Activated CD4-positive, alpha-beta T cell treated with anti-CD3 and anti-CD28 coated beads for 36 hours (primary cell): ENCODE measurements at regions of chr10 and their contacts with region 1.

Region 1: GRCh38 chr10:72692057-72692910 is at the start of gene MCU:
- DNase-seq: peak; percentile 96
- ATAC-seq: peak; percentile 98
- H3K4me3 Mint-ChIP-seq: peak within 1 kb of the TSS; percentile 77
- H3K27ac Mint-ChIP-seq: peak within 1 kb of the TSS; percentile 75
- H3K4me1 Mint-ChIP-seq: peaks cover 40% of the 10 kb centered on the region
- H3K27me3 Mint-ChIP-seq: no peaks in the 10 kb centered on the region
- total RNA-seq, gene MCU: 15.1 to 16.0 TPM

Region 2: GRCh38 chr10:72088889-72089575 is 603.3 kb before region 1 on chr10:
- CTCF ChIA-PET with region 1: no interaction called
- POLR2A ChIA-PET with region 1: interaction called, 3 read pairs
- intact Hi-C with region 1: loop called in 1 of 2 experiments (anchors 5 kb)
- DNase-seq: peak; percentile 79
- ATAC-seq: peak; percentile 50
- H3K4me3 Mint-ChIP-seq: peak overlapping the region; percentile 98
- H3K27ac Mint-ChIP-seq: peak overlapping the region; percentile 100
- H3K4me1 Mint-ChIP-seq: peaks cover 57% of the 10 kb centered on the region
- H3K27me3 Mint-ChIP-seq: no peaks in the 10 kb centered on the region

Region 3: DNA sequence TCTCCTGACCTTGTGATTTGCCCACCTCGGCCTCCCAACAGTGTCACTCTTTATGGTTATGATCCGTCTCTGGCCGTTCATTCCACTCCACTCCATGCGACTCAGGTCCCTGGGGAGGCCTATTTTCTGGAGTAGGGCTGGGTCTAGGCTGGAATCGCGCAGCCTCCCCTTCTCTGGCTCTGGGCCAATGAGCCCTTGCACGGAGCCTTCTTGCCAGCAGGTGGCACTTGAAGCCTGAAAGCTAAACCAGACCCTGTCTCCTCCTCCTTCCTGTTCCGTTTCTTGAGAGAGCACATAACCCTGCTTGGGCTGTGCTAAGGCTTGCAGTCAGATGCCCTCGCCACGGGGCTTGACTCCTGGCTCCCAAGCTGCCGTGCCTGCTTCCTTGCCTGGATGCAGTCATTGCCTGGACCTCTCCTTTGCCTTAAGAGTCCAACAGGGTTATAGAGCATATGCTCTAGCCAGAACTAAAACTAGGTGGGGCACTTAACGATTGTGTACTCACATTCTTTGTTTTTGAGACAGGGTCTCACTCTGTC is 328.0 kb before region 1 on chr10:
- CTCF ChIA-PET with region 1: interaction called, 5 read pairs
- POLR2A ChIA-PET with region 1: no interaction called
- intact Hi-C with region 1: loop called (anchors 1 to 5 kb)
- DNase-seq: peak; percentile 92
- ATAC-seq: peak; percentile 99
- H3K4me3 Mint-ChIP-seq: no peak overlapping the region
- H3K27ac Mint-ChIP-seq: peak overlapping the region; percentile 68
- H3K4me1 Mint-ChIP-seq: peaks cover 13% of the 10 kb centered on the region
- H3K27me3 Mint-ChIP-seq: no peaks in the 10 kb centered on the region

Region 4: DNA sequence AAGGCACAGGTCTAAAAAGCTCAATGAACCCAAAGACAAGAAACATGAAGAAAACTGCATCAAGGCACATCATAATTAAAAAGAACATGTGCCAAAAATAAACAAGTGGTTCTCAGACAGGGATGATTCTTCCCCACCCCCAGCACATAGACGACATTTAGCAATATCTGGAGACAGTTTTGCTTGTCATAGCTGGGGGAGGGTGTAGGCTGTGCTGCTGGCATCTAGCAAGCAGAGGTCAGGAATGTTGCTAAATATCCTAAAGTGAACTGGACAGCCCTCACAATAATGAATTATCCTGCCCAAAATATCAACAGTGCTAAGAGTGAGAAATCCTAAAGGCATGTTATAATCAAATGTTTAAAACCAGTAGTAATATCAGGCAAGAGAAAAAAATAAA is 189.0 kb before region 1 on chr10:
- CTCF ChIA-PET with region 1: no interaction called
- POLR2A ChIA-PET with region 1: no interaction called
- intact Hi-C with region 1: no loop called
- DNase-seq: no peak
- ATAC-seq: no peak
- H3K4me3 Mint-ChIP-seq: no peak overlapping the region
- H3K27ac Mint-ChIP-seq: no peak overlapping the region
- H3K4me1 Mint-ChIP-seq: peaks cover 4% of the 10 kb centered on the region
- H3K27me3 Mint-ChIP-seq: no peaks in the 10 kb centered on the region

Region 5: DNA sequence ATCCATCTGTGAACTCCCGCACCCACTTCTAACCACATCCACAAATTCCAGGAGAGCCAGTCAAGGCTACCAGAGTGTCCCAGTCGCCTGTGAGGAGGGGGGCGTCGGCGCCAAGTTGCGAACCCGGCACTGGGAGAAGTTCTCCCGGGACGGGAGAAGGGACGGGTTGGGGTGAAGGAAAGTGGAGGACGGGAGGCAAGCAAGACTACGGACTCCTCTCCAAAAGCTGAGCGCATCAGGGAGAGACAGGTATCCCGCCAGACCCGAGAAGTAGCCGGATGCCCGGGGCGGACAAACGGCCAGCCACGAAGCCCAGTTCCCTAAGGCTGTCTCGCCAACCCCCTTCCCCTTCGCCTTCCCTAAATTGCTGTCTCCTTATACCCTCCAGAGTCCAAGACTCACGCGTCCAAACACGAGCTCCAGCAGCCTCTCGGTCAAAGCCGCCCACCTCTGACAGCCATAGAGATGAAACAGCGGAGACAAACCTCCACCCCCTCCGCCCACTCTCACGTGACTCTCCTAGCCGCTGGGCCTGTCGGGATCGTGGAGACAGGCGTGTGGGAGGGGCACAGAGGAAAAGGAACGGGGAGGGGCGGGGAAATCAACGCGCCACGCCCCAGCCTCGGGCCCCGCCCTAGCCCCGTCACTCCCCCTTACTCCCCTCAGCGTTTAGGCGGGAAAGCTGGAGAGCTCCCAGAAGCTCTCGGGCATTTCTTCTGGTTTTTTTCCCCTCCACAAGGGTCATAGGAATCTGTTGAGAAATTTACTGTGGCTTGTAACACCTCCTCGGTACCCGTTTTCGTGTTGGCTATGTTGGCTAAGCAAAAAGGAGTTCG is 66.5 kb before region 1 on chr10 and contains the start of gene MICU1:
- CTCF ChIA-PET with region 1: interaction called, 3 read pairs
- POLR2A ChIA-PET with region 1: interaction called, 6 read pairs
- intact Hi-C with region 1: loop called (anchors 1 to 5 kb)
- DNase-seq: peak; percentile 98
- ATAC-seq: peak; percentile 99
- H3K4me3 Mint-ChIP-seq: peak within 1 kb of the TSS; percentile 94
- H3K27ac Mint-ChIP-seq: peak within 1 kb of the TSS; percentile 91
- H3K4me1 Mint-ChIP-seq: peaks cover 7% of the 10 kb centered on the region
- H3K27me3 Mint-ChIP-seq: no peaks in the 10 kb centered on the region
- total RNA-seq, gene MICU1: 41.0 to 51.5 TPM

Region 6: GRCh38 chr10:72667207-72667864 is 24.9 kb before region 1 on chr10:
- CTCF ChIA-PET with region 1: no interaction called
- POLR2A ChIA-PET with region 1: no interaction called
- intact Hi-C with region 1: no loop called
- DNase-seq: no peak
- ATAC-seq: no peak
- H3K4me3 Mint-ChIP-seq: no peak overlapping the region
- H3K27ac Mint-ChIP-seq: no peak overlapping the region
- H3K4me1 Mint-ChIP-seq: no peaks in the 10 kb centered on the region
- H3K27me3 Mint-ChIP-seq: no peaks in the 10 kb centered on the region

Region 7: GRCh38 chr10:72834183-72834825 is 142.0 kb after region 1 on chr10:
- CTCF ChIA-PET with region 1: interaction called, 5 read pairs
- POLR2A ChIA-PET with region 1: interaction called, 6 read pairs
- intact Hi-C with region 1: loop called (anchors 1 to 10 kb)
- DNase-seq: peak; percentile 52
- ATAC-seq: peak; percentile 58
- H3K4me3 Mint-ChIP-seq: no peak overlapping the region
- H3K27ac Mint-ChIP-seq: no peak overlapping the region
- H3K4me1 Mint-ChIP-seq: peaks cover 2% of the 10 kb centered on the region
- H3K27me3 Mint-ChIP-seq: no peaks in the 10 kb centered on the region

Region 8: DNA sequence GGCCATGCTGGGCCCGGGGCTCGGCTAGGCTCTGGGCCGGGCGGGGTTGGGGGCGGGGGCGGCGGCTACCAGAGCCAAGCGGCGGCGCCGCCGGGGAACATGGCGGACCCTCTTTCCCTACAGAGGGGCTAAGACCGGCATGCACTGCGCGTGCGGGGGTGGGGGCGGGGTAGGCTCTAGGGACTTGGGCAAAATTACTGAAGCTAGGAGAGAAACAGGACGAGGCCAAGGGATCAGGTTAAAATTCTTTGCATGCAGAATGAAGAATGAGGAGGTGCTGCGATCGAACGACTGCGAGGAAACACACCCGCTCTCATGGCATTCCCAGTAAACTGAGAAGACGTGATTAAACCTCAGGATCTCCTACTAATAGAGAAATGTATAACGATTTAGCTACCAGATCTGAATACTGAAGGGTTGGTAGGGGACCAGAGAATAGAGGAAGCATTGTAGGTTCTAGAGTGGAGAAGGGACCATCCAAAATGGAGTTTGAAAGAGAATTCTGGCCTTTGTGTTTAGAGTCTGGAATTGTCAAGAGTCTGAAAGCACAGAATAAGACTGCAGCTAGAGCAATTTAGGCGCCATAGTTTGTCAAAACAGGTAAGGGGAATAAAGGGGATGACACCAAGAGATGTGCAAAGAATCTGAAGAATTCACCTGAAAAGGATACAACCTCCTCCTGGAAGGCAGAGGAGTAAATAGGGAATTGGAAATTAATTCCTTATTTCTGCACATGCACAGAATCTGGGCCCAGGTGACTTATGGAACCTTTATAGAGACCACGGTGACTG is 803.8 kb after region 1 on chr10 and contains the start of gene PPP3CB:
- CTCF ChIA-PET with region 1: no interaction called
- POLR2A ChIA-PET with region 1: no interaction called
- intact Hi-C with region 1: loop called in 1 of 2 experiments (anchors 5 kb)
- DNase-seq: peak; percentile 96
- ATAC-seq: peak; percentile 81
- H3K4me3 Mint-ChIP-seq: peak within 1 kb of the TSS; percentile 91
- H3K27ac Mint-ChIP-seq: peak within 1 kb of the TSS; percentile 99
- H3K4me1 Mint-ChIP-seq: peaks cover 45% of the 10 kb centered on the region
- H3K27me3 Mint-ChIP-seq: no peaks in the 10 kb centered on the region
- total RNA-seq, gene PPP3CB: 42.3 to 45.3 TPM